ENCODE measurements at regions of chr1 and their contacts with region 1.

Region 1: GRCh38 chr1:91282695-91283420 is 121.8 kb downstream of the HFM1 start:
- DNase-seq: peak in 4 of 5 donors; percentile 32 to 49 (median 44)
- ATAC-seq: peak in 3 of 4 donors; percentile 55 to 82 (median 72)
- H3K4me3 ChIP-seq: peak overlapping the region in 8 of 12 donors; percentile 14 to 42 (median 24)
- H3K27ac ChIP-seq: no peak overlapping the region
- H3K4me1 ChIP-seq: peaks cover 0 to 9% (median 0%) of the 10 kb centered on the region in 12 donors
- H3K27me3 ChIP-seq: no peaks in the 10 kb centered on the region
- CTCF ChIP-seq: peak; percentile 65 to 87 (median 79)
- POLR2A ChIP-seq: no peak

Region 2: DNA sequence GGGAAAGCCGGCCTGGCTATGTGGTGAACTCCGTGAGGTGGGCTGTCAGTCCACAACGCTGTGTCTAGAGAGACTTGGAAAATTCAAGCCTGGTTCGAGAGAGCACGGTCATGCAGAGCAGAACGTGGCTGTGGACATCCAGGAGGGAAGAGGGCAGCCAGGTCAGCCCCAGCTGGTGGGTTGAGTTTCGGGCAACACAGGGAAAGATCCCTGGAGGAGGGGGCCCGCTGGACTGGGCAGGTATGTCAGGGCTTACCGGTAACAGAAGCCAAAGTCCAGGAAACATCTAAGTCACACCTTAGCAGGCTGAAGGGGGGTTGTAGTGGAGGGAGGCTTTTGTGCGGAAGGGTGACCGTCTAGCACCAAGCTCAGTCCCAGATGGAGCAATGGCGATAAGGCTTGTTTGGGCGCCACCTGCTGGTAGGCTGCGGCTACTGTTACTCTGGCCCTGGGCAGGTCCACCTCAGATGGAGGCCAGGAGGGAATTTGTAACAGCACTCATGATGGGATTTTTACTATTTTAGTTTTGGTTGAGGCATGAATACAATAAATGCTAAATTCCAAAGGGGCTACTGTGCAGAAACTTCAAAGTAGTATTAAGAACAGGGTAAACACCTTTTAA is 117.7 kb before region 1 on chr1:
- intact Hi-C with region 1: loop called in 1 of 10 experiments (anchors 5 kb)
- DNase-seq: peak; percentile 60 to 80 (median 66)
- ATAC-seq: peak; percentile 78 to 96 (median 90)
- H3K4me3 ChIP-seq: no peak overlapping the region
- H3K27ac ChIP-seq: no peak overlapping the region
- H3K4me1 ChIP-seq: no peaks in the 10 kb centered on the region
- H3K27me3 ChIP-seq: peaks cover 0 to 8% (median 0%) of the 10 kb centered on the region in 9 donors
- CTCF ChIP-seq: peak; percentile 79 to 94 (median 87)
- POLR2A ChIP-seq: no peak

Region 3: GRCh38 chr1:91412371-91412770 is 129.5 kb after region 1 on chr1:
- intact Hi-C with region 1: no loop called
- DNase-seq: no peak
- ATAC-seq: no peak
- H3K4me3 ChIP-seq: no peak overlapping the region
- H3K27ac ChIP-seq: no peak overlapping the region
- H3K4me1 ChIP-seq: no peaks in the 10 kb centered on the region
- H3K27me3 ChIP-seq: peaks cover 0 to 3% (median 0%) of the 10 kb centered on the region in 9 donors
- CTCF ChIP-seq: no peak
- POLR2A ChIP-seq: no peak

Region 4: GRCh38 chr1:91500756-91501522 is 218.1 kb after region 1 on chr1 and contains the start of gene CDC7:
- intact Hi-C with region 1: loop called in 8 of 10 experiments (anchors 2 to 10 kb)
- DNase-seq: peak; percentile 91 to 95 (median 93)
- ATAC-seq: peak; percentile 96 to 97 (median 96)
- H3K4me3 ChIP-seq: peak within 1 kb of the TSS; percentile 45 to 79 (median 64)
- H3K27ac ChIP-seq: peak within 1 kb of the TSS; percentile 54 to 92 (median 84)
- H3K4me1 ChIP-seq: peaks cover 0 to 35% (median 13%) of the 10 kb centered on the region in 12 donors
- H3K27me3 ChIP-seq: no peaks in the 10 kb centered on the region
- CTCF ChIP-seq: peak; percentile 11 to 59 (median 41)
- POLR2A ChIP-seq: peak in 1 of 2 donors; percentile 27
- total RNA-seq, gene CDC7: 0.36 to 6.3 (median 0.97) TPM

Region 5: DNA sequence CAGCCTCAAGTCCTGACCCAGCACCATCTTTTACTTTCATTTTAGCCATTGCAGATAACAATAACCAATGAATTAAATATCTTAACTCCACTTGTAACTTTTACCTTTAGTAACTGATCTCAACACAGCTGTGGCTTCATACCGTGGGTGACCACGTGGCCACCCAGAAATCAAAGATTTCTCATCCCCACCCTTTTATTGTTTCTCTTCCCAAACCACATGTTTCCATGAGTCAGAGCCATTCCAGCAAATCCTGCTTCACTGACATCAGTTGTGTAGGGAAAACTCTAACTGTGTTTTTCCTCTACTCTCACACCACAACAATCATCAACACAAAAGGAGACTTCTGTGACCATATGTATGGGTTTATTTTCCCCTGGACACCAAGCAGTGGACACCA is 641.3 kb after region 1 on chr1:
- intact Hi-C with region 1: loop called in 9 of 10 experiments (anchors 2 to 5 kb)
- DNase-seq: no peak
- ATAC-seq: peak in 2 of 4 donors; percentile 33 to 56
- H3K4me3 ChIP-seq: no peak overlapping the region
- H3K27ac ChIP-seq: no peak overlapping the region
- H3K4me1 ChIP-seq: peaks cover 0 to 3% (median 0%) of the 10 kb centered on the region in 12 donors
- H3K27me3 ChIP-seq: no peaks in the 10 kb centered on the region
- CTCF ChIP-seq: no peak
- POLR2A ChIP-seq: no peak

Region 6: DNA sequence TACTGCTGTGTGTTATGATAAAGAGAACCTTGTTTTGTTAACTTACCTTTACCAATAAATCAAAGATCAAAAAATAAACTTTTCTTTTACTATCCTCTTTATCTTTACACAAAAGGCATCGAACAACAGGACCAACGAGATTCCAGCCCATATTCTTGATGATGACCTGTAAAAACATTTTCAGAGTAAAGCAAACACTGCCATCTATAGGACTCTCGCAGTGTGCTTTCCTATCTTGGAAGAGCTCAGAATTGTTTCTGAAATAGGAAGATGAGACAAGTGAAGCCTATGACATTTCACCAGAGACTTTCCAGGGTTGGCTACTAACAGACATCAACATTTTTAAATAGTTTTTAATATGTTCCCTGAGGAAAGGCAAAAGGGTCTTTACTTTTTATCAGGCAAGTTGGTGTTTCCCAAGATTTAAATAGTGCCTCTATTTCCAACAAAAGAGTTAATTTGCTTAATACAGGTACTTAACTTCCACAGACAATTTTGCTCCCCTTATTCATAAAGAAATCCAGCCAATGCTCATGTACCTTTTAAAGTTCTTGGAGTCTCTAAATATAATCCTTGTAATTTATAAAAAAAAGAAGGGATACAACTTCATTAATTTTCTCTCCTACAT is 1008.6 kb after region 1 on chr1:
- intact Hi-C with region 1: loop called in 2 of 10 experiments (anchors 5 to 10 kb)
- DNase-seq: no peak
- ATAC-seq: peak in 2 of 4 donors; percentile 54 to 65
- H3K4me3 ChIP-seq: no peak overlapping the region
- H3K27ac ChIP-seq: no peak overlapping the region
- H3K4me1 ChIP-seq: no peaks in the 10 kb centered on the region
- H3K27me3 ChIP-seq: no peaks in the 10 kb centered on the region
- CTCF ChIP-seq: peak; percentile 40 to 70 (median 57)
- POLR2A ChIP-seq: no peak

Measured in heart left ventricle (tissue), 16 donors.